MCF 10A (cell line): ENCODE measurements at regions of chr7 and their contacts with region 1.

Region 1: GRCh38 chr7:73738612-73739374 is at the start of gene ABHD11:
- DNase-seq: peak; percentile 94
- H3K4me3 Mint-ChIP-seq: peak within 1 kb of the TSS; percentile 91
- H3K27ac Mint-ChIP-seq: peak within 1 kb of the TSS; percentile 94
- H3K4me1 Mint-ChIP-seq: peaks cover 14% of the 10 kb centered on the region
- H3K27me3 Mint-ChIP-seq: no peaks in the 10 kb centered on the region
- CTCF ChIP-seq: no peak
- total RNA-seq, gene ABHD11: 15.3 and 18.9 TPM in 2 replicates

Region 2: DNA sequence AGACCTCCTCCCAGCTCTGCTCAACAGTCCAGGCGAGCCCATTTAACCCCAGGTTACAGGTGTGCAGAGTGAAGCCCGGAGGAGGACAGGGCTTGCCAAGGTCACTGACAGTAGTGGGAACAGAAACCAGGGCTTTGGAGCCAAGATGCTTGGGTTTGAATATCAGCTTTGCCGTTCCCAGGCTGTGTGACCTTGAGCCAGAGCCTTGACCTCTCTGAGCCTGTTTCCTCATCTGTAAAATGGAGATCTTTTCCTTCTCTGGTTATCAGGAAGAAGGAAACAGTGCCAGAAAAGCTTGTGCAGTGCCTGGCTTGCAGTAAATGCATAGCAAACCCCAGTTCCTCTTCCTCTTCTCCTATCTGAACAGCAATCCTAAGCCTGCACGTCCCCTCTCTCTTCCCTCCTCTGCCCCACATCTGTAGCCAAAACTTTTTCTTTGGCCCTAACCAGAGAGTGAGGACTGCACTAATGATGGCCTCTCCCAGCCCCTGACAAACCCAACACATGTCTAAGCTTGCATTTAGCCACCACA is 93.1 kb before region 1 on chr7:
- CTCF ChIA-PET with region 1: interaction called, 14 read pairs
- POLR2A ChIA-PET with region 1: no interaction called
- intact Hi-C with region 1: no loop called
- DNase-seq: no peak
- H3K4me3 Mint-ChIP-seq: no peak overlapping the region
- H3K27ac Mint-ChIP-seq: no peak overlapping the region
- H3K4me1 Mint-ChIP-seq: peaks cover 16% of the 10 kb centered on the region
- H3K27me3 Mint-ChIP-seq: peaks cover 26% of the 10 kb centered on the region
- CTCF ChIP-seq: no peak

Region 3: GRCh38 chr7:73726083-73726466 is 12.7 kb before region 1 on chr7:
- CTCF ChIA-PET with region 1: interaction called, 16 read pairs
- POLR2A ChIA-PET with region 1: interaction called, 4 read pairs
- intact Hi-C with region 1: no loop called
- DNase-seq: no peak
- H3K4me3 Mint-ChIP-seq: no peak overlapping the region
- H3K27ac Mint-ChIP-seq: no peak overlapping the region
- H3K4me1 Mint-ChIP-seq: peaks cover 9% of the 10 kb centered on the region
- H3K27me3 Mint-ChIP-seq: no peaks in the 10 kb centered on the region
- CTCF ChIP-seq: no peak

Region 4: DNA sequence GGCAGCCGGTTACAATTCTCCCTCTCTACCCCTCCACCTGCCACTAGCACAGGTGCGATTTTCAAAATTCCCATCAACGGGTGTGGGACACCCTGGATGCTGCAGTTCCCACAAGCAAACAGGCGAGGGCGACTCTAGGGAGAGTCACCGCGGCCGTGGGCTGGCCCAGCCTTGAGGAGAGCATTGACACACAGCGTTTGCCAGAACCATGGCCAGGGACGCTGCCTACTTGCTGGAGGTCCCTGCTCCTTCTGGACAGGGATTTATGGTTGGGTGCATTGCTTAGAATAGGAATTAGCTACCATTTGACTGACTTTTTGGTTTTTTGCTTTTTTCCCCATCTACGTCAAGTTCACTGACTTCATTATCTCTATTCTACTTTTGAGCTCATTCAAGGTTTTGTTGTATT is 73.0 kb after region 1 on chr7:
- CTCF ChIA-PET with region 1: no interaction called
- POLR2A ChIA-PET with region 1: interaction called, 3 read pairs
- intact Hi-C with region 1: loop called (anchors 10 kb)
- DNase-seq: peak; percentile 84
- H3K4me3 Mint-ChIP-seq: no peak overlapping the region
- H3K27ac Mint-ChIP-seq: no peak overlapping the region
- H3K4me1 Mint-ChIP-seq: peaks cover 5% of the 10 kb centered on the region
- H3K27me3 Mint-ChIP-seq: no peaks in the 10 kb centered on the region
- CTCF ChIP-seq: peak; percentile 77

Region 5: DNA sequence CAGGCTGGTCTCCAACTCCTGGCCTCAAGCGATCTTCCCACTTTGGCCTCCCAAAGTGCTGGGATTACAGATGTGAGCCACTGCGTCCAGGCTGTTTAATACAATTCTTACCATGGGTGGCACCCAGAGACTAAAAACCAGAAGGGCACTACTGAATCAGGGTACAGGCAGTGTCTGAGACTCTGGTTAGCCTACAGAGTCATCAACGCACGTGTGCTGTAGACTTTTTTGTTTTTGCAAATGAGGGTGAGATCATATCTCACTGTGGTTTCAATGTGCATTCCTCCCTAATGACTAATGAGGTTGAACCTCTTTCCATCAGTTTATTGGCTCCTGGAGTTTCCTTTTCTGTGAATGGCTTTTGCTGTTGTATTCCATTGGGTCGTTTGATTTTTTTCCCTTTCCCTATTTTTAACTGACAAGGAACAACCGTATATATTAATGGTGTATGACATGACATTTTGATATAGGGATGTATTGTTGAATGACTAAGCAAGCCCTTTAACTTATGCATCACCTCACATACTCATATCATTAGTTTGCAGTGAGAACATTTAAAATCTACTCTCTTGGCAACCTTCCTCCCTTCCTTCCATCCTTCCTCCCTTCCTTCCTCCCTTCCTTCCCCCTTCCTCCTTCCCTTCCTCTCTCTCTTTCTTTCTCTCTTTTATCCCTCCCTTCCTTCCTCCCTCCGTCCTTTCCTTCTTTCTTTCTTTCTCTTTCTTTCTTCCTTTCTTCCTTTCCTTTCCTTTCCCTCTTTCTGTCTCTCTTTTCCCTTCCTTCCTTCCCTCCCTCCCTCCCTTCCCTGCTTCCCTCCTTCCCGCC is 112.8 kb after region 1 on chr7:
- CTCF ChIA-PET with region 1: interaction called, 35 read pairs
- POLR2A ChIA-PET with region 1: interaction called, 28 read pairs
- intact Hi-C with region 1: loop called (anchors 1 kb)
- DNase-seq: peak; percentile 97
- H3K4me3 Mint-ChIP-seq: peak overlapping the region; percentile 43
- H3K27ac Mint-ChIP-seq: peak overlapping the region; percentile 94
- H3K4me1 Mint-ChIP-seq: peaks cover 39% of the 10 kb centered on the region
- H3K27me3 Mint-ChIP-seq: no peaks in the 10 kb centered on the region
- CTCF ChIP-seq: no peak